ENCODE measurements at regions of chr19 and their contacts with region 1.

Region 1: GRCh38 chr19:35213663-35214632 is 14.6 kb downstream of the FAM187B start:
- DNase-seq: peak; percentile 53 to 96 (median 84)
- ATAC-seq: peak; percentile 51
- H3K4me3 Mint-ChIP-seq: peak overlapping the region; percentile 57 to 85 (median 77)
- H3K27ac Mint-ChIP-seq: peak overlapping the region; percentile 95 to 100 (median 100)
- H3K4me1 Mint-ChIP-seq: peaks cover 20 to 82% (median 70%) of the 10 kb centered on the region in 4 donors
- H3K27me3 Mint-ChIP-seq: peaks cover 0 to 2% (median 0%) of the 10 kb centered on the region in 5 donors

Region 2: GRCh38 chr19:35140962-35141637 is 72.8 kb before region 1 on chr19:
- POLR2A ChIA-PET with region 1: interaction called, 36 read pairs
- DNase-seq: peak; percentile 80 to 98 (median 93)
- ATAC-seq: peak; percentile 77 to 84
- H3K4me3 Mint-ChIP-seq: peak overlapping the region; percentile 75 to 93 (median 87)
- H3K27ac Mint-ChIP-seq: peak overlapping the region; percentile 33 to 94 (median 84)
- H3K4me1 Mint-ChIP-seq: peaks cover 23 to 49% (median 44%) of the 10 kb centered on the region in 4 donors
- H3K27me3 Mint-ChIP-seq: peaks cover 0 to 2% (median 0%) of the 10 kb centered on the region in 5 donors

Region 3: GRCh38 chr19:35168207-35168606 is 45.7 kb before region 1 on chr19:
- POLR2A ChIA-PET with region 1: interaction called, 30 read pairs
- DNase-seq: no peak
- ATAC-seq: no peak
- H3K4me3 Mint-ChIP-seq: peak overlapping the region in 1 of 10 donors; percentile 29
- H3K27ac Mint-ChIP-seq: peak overlapping the region; percentile 54 to 95 (median 94)
- H3K4me1 Mint-ChIP-seq: peaks cover 22 to 53% (median 46%) of the 10 kb centered on the region in 4 donors
- H3K27me3 Mint-ChIP-seq: no peaks in the 10 kb centered on the region

Region 4: DNA sequence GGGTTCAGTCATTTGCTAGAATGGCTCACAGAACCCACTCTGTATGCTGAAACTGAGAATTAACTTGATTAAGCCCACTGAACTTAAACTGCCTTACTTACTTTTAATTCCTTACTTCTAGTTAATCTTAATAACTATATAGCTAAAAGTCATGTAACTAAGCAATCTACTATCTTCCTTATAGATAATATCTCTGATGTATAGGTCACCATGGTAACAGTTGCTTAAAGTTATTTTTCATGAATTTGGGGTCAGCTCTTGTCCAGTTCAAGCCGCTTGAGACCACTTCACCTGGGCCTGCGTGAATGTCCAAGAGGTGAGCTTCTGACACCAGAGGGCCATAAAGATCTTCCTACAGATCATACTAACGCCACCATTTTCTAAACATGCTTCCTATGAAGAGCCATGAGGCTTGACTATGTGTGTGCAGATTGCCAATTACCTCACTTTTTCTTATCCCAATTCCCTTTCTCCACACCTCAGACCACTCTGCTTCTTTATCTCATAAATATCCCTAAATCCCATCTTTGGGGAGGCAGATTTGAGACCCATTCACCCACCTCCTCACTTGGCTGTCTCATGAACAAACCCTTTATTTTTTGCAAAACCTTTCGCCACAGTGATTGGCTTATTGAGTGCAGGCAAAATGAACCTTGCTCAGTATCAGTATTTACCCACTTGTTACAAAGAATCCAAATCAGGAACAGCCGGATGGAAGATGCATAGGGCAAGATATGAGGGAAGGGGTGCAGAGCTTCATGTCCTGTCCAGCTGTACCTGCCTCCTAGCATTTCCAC is 19.9 kb before region 1 on chr19:
- POLR2A ChIA-PET with region 1: interaction called, 13 read pairs
- DNase-seq: no peak
- ATAC-seq: no peak
- H3K4me3 Mint-ChIP-seq: no peak overlapping the region
- H3K27ac Mint-ChIP-seq: peak overlapping the region in 6 of 10 donors; percentile 11 to 70 (median 38)
- H3K4me1 Mint-ChIP-seq: peaks cover 7 to 19% (median 14%) of the 10 kb centered on the region in 4 donors
- H3K27me3 Mint-ChIP-seq: no peaks in the 10 kb centered on the region

Region 5: GRCh38 chr19:35236638-35237400 is 22.9 kb after region 1 on chr19:
- POLR2A ChIA-PET with region 1: interaction called, 234 read pairs
- DNase-seq: peak in 1 of 10 donors; percentile 66
- ATAC-seq: no peak
- H3K4me3 Mint-ChIP-seq: no peak overlapping the region
- H3K27ac Mint-ChIP-seq: peak overlapping the region in 8 of 10 donors; percentile 8 to 72 (median 62)
- H3K4me1 Mint-ChIP-seq: peaks cover 19 to 35% (median 32%) of the 10 kb centered on the region in 4 donors
- H3K27me3 Mint-ChIP-seq: no peaks in the 10 kb centered on the region

Region 6: DNA sequence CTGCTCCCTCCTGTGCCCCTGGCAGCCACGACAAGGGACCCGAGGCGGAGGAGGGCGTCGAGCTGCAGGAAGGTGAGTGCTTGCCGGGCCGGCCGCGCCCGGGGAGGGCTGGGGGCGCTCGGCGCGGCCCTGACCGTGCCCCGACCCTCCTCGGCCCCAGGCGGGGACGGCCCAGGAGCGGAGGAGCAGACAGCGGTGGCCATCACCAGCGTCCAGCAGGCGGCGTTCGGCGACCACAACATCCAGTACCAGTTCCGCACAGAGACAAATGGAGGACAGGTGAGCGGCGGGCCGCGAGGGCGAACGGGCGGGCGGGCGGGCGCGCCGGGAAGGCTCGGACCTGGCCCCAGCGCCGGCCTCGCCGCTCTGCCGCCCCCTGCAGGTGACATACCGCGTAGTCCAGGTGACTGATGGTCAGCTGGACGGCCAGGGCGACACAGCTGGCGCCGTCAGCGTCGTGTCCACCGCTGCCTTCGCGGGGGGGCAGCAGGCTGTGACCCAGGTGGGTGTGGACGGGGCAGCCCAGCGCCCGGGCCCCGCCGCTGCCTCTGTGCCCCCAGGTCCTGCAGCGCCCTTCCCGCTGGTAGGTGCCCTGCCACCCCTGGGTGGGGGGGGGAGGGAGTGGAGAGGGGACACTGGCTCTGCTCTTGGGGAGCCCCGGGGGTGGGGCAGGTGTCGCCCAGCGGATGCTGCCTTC is 55.6 kb after region 1 on chr19:
- POLR2A ChIA-PET with region 1: interaction called, 42 read pairs
- DNase-seq: peak; percentile 54 to 87 (median 66)
- ATAC-seq: peak; percentile 52 to 62
- H3K4me3 Mint-ChIP-seq: peak overlapping the region; percentile 64 to 89 (median 72)
- H3K27ac Mint-ChIP-seq: peak overlapping the region in 9 of 10 donors; percentile 62 to 90 (median 83)
- H3K4me1 Mint-ChIP-seq: peaks cover 25 to 57% (median 52%) of the 10 kb centered on the region in 4 donors
- H3K27me3 Mint-ChIP-seq: no peaks in the 10 kb centered on the region